GM23248 (cell line): ENCODE measurements at regions of chr3 and their contacts with region 1.

Region 1: GRCh38 chr3:184543843-184544512 is 17.6 kb upstream of the EPHB3 start:
- DNase-seq: peak; percentile 87
- H3K4me3 ChIP-seq: no peak overlapping the region
- H3K27ac ChIP-seq: no peak overlapping the region
- H3K4me1 ChIP-seq: no peaks in the 10 kb centered on the region
- H3K27me3 ChIP-seq: peaks cover 35% of the 10 kb centered on the region

Region 2: GRCh38 chr3:183924956-183925355 is 619.0 kb before region 1 on chr3:
- in situ Hi-C with region 1: loop called (anchors 25 kb)
- DNase-seq: peak; percentile 43
- H3K4me3 ChIP-seq: no peak overlapping the region
- H3K27ac ChIP-seq: no peak overlapping the region
- H3K4me1 ChIP-seq: no peaks in the 10 kb centered on the region
- H3K27me3 ChIP-seq: no peaks in the 10 kb centered on the region

Region 3: DNA sequence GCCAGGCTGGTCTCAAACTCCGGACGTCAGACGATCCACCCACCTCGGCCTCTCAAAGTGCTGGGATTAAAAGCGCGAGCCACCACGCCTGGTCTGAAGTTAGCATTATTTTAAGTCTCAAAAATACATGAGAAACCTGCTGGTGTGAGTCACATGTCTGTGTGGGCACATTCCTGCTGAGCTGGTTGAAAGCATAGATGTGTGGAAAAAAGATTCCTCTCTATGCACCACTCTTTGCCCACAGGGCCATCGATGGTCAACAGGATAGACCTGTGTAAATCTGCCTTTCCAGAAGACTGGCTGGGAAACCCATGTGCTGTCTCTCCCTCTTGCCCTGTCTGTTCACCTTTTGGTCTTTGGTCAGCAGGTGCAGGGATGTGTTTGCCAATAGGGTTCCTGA is 100.6 kb before region 1 on chr3:
- in situ Hi-C with region 1: no loop called
- DNase-seq: peak; percentile 12
- H3K4me3 ChIP-seq: no peak overlapping the region
- H3K27ac ChIP-seq: no peak overlapping the region
- H3K4me1 ChIP-seq: no peaks in the 10 kb centered on the region
- H3K27me3 ChIP-seq: peaks cover 4% of the 10 kb centered on the region